ENCODE measurements at regions of chr1 and their contacts with region 1.

Region 1: DNA sequence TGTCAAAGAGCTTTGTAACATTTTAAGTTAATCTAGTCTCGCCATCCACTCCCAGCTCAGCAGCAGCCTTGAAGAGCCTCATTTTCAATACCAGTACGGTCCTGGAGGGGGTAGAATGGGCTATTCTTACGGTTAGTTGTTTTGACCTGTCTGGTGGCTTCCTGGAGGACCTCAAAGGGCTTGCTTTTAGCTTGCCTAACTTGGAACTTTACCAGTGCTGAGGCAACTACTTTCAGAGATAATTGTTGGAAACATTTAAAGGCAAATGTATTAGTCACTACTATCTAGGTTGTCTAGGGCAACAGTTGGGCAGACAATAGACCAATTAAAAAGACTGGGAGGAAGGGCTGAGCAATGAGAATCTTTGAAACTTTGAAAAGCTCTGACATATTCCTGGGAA is 56.0 kb downstream of the TTLL7 start:
- DNase-seq: no peak
- H3K4me3 Mint-ChIP-seq: no peak overlapping the region
- H3K27ac Mint-ChIP-seq: no peak overlapping the region
- H3K4me1 Mint-ChIP-seq: no peaks in the 10 kb centered on the region
- H3K27me3 Mint-ChIP-seq: no peaks in the 10 kb centered on the region
- CTCF ChIP-seq: no peak

Region 2: GRCh38 chr1:83827741-83828522 is 115.0 kb before region 1 on chr1:
- CTCF ChIA-PET with region 1: no interaction called
- POLR2A ChIA-PET with region 1: no interaction called
- intact Hi-C with region 1: no loop called
- DNase-seq: no peak
- H3K4me3 Mint-ChIP-seq: no peak overlapping the region
- H3K27ac Mint-ChIP-seq: no peak overlapping the region
- H3K4me1 Mint-ChIP-seq: no peaks in the 10 kb centered on the region
- H3K27me3 Mint-ChIP-seq: no peaks in the 10 kb centered on the region
- CTCF ChIP-seq: no peak

Region 3: GRCh38 chr1:83931658-83932253 is 11.2 kb before region 1 on chr1:
- CTCF ChIA-PET with region 1: interaction called, 29 read pairs
- POLR2A ChIA-PET with region 1: no interaction called
- intact Hi-C with region 1: no loop called
- DNase-seq: peak; percentile 68
- H3K4me3 Mint-ChIP-seq: no peak overlapping the region
- H3K27ac Mint-ChIP-seq: no peak overlapping the region
- H3K4me1 Mint-ChIP-seq: no peaks in the 10 kb centered on the region
- H3K27me3 Mint-ChIP-seq: no peaks in the 10 kb centered on the region
- CTCF ChIP-seq: peak; percentile 62

Region 4: GRCh38 chr1:83970114-83970513 is 27.2 kb after region 1 on chr1:
- CTCF ChIA-PET with region 1: no interaction called
- POLR2A ChIA-PET with region 1: no interaction called
- intact Hi-C with region 1: no loop called
- DNase-seq: no peak
- H3K4me3 Mint-ChIP-seq: no peak overlapping the region
- H3K27ac Mint-ChIP-seq: no peak overlapping the region
- H3K4me1 Mint-ChIP-seq: no peaks in the 10 kb centered on the region
- H3K27me3 Mint-ChIP-seq: no peaks in the 10 kb centered on the region
- CTCF ChIP-seq: no peak

Measured in MCF 10A (cell line).